ENCODE measurements at regions of chr19 and their contacts with region 1.

Region 1: GRCh38 chr19:50922317-50922853 is 11.2 kb upstream of the KLK4 start:
- DNase-seq: peak; percentile 77
- H3K4me3 ChIP-seq: no peak overlapping the region
- H3K27ac ChIP-seq: no peak overlapping the region
- H3K4me1 ChIP-seq: peaks cover 22% of the 10 kb centered on the region
- H3K27me3 ChIP-seq: no peaks in the 10 kb centered on the region
- CTCF ChIP-seq: peak; percentile 72 to 94

Region 2: DNA sequence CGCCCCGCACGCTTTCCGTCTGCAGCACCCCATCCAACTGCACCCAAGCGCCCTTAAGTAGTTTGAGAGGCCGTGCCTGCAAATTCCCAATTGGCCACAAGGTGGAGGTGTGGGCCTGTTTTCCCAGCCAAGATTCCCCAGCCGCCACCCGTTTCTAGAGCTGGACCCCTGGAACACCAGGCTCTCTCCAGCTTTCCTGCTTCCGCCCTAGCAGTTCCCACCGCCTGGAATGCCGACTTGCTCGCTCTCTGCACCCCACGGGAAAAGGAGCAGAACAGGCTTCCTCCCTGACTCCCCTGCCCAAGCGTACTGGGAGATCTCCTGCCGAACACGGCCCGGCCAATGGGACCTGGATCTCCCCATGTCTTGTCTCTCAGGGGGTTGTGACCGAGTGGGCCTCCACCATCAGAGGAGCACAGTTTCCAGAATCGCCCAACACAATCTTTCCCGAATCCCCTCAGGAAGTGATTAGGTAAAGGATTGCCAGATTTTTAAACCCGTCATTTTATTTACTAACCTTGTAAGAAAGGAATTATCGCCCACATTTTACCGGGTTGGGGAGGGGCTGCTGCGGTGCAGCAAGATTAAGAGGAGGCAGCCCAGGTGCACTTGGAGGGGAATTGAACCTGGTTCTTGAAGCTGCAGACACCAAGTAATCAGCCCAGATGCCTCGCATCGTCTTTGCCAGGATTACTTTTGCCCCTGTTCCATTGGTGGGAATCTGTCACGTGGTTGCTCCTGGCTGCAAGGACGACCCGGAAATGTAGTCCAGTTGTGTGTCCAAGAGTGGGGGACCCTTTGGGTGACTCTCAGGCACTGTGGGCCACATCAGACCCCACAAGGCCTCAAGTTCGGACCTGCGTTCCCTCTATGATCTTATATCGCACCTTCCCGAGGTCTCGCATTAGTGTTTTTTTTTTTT is 553.5 kb before region 1 on chr19:
- CTCF ChIA-PET with region 1: no interaction called
- dilution Hi-C with region 1: no loop called
- in situ Hi-C with region 1: no loop called
- intact Hi-C with region 1: loop called (anchors 2 kb)
- DNase-seq: peak; percentile 73
- H3K4me3 ChIP-seq: peak overlapping the region; percentile 72 to 75 (median 74)
- H3K27ac ChIP-seq: peak overlapping the region; percentile 36
- H3K4me1 ChIP-seq: peaks cover 5% of the 10 kb centered on the region
- H3K27me3 ChIP-seq: no peaks in the 10 kb centered on the region
- CTCF ChIP-seq: peak; percentile 68 to 82

Region 3: GRCh38 chr19:50669302-50670101 is 252.9 kb before region 1 on chr19:
- CTCF ChIA-PET with region 1: interaction called, 16 read pairs
- dilution Hi-C with region 1: no loop called
- in situ Hi-C with region 1: no loop called
- intact Hi-C with region 1: no loop called
- DNase-seq: no peak
- H3K4me3 ChIP-seq: no peak overlapping the region
- H3K27ac ChIP-seq: no peak overlapping the region
- H3K4me1 ChIP-seq: no peaks in the 10 kb centered on the region
- H3K27me3 ChIP-seq: peaks cover 30% of the 10 kb centered on the region
- CTCF ChIP-seq: peak; percentile 78 to 79

Region 4: GRCh38 chr19:50724522-50725217 is 197.7 kb before region 1 on chr19:
- CTCF ChIA-PET with region 1: no interaction called
- dilution Hi-C with region 1: no loop called
- in situ Hi-C with region 1: loop called in 1 of 2 experiments (anchors 10 kb)
- intact Hi-C with region 1: loop called (anchors 5 kb)
- DNase-seq: peak; percentile 99
- H3K4me3 ChIP-seq: peak overlapping the region; percentile 66 to 82 (median 66)
- H3K27ac ChIP-seq: peak overlapping the region; percentile 39
- H3K4me1 ChIP-seq: peaks cover 25% of the 10 kb centered on the region
- H3K27me3 ChIP-seq: no peaks in the 10 kb centered on the region
- CTCF ChIP-seq: peak; percentile 40 to 64

Region 5: GRCh38 chr19:50794439-50795237 is 127.7 kb before region 1 on chr19:
- CTCF ChIA-PET with region 1: interaction called, 6 read pairs
- dilution Hi-C with region 1: no loop called
- in situ Hi-C with region 1: loop called in 1 of 2 experiments (anchors 10 kb)
- intact Hi-C with region 1: loop called (anchors 2 kb)
- DNase-seq: peak; percentile 43
- H3K4me3 ChIP-seq: no peak overlapping the region
- H3K27ac ChIP-seq: no peak overlapping the region
- H3K4me1 ChIP-seq: no peaks in the 10 kb centered on the region
- H3K27me3 ChIP-seq: no peaks in the 10 kb centered on the region
- CTCF ChIP-seq: peak; percentile 20 to 47

Region 6: DNA sequence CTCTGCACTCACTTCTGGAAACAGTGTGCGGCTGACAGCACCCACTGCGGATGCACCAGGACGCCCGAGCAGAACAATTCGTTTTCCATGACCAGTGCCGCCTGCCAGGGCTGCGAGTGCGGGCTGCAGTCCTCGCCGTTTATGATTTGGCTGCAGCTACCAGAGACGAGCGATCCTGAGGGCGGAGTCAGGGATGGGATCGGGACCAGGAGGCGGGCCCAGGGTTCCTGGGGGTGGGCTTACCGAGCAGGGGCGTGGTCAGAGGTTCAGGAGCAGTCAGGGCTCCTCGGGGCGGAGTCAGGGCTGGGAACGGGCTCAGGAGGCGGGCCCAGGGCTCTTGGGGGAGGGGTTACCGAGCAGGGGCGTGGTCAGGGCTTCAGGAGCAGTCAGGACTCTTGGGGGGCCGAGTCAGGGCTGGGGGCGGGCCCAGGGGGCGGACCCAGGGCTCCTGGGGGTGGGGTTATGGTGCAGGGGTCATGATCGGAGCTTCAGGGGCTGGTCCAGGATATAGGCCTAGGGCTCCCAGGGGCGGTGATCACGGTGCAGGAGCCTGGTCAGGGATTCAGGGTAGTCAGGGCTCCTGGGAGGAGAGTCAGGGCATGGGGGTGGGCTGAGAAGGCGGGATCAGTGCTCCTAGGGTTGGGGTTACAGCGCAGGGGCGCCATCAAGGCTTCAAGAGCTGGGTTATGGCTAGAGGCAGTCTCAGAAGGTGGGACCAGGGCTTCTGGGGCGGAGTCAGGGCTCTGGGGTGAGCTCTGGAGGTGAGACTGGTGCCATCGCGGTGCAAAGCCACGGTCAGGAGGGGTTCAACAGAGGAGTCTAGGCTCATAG is 12.9 kb before region 1 on chr19:
- CTCF ChIA-PET with region 1: no interaction called
- dilution Hi-C with region 1: no loop called
- in situ Hi-C with region 1: no loop called
- intact Hi-C with region 1: loop called (anchors 1 kb)
- DNase-seq: peak; percentile 39
- H3K4me3 ChIP-seq: peak overlapping the region in 2 of 3 experiments; percentile 2 to 35
- H3K27ac ChIP-seq: no peak overlapping the region
- H3K4me1 ChIP-seq: peaks cover 8% of the 10 kb centered on the region
- H3K27me3 ChIP-seq: peaks cover 20% of the 10 kb centered on the region
- CTCF ChIP-seq: no peak

Measured in mammary epithelial cell (primary cell).